ENCODE measurements at regions of chr11 and their contacts with region 1.

Region 1: DNA sequence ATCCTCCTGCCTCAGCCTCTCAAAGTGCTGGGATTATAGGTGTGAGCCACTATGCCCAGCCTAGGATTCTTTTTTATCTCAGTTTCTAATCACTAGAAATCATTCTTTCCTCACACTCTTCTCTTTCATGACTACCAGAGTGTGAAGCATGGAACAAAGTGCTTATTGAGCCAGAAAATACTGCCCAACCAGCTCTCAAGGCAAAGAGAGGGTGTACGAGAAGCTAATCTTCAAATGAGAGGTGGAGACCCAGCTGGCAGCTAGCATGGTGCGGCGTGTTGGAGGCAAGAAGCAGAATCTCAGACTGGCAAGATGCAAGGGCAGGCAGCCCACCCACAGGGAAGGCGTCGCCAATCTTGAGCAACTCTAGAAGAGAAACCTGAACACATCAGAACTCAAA is 41.1 kb upstream of the ME3 start:
- DNase-seq: no peak
- H3K4me3 ChIP-seq: no peak overlapping the region
- CTCF ChIP-seq: no peak
- POLR2A ChIP-seq: no peak

Region 2: DNA sequence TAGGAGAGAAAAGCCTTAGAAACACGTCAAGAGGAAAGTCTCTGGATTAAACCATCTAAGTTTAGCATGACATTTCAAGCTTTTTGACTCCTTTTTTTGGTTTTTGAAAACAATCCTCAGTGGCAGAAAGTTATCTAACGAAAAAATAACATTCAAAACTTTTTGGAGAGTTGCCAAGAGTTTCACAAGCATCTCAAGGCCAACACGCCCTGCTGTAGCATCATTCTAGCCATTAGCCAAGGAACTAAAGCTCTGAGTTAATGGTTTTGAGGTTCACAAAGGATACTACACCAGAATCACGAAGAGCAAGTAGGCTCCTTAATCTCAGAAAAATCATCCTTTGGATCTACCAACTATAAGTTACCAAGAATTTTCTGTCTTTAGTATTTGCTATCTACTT is 739.4 kb before region 1 on chr11:
- intact Hi-C with region 1: loop called (anchors 5 kb)
- DNase-seq: no peak
- H3K4me3 ChIP-seq: no peak overlapping the region
- CTCF ChIP-seq: no peak
- POLR2A ChIP-seq: no peak

Region 3: GRCh38 chr11:86608251-86608799 is 105.2 kb before region 1 on chr11:
- intact Hi-C with region 1: no loop called
- DNase-seq: peak; percentile 64 to 90
- H3K4me3 ChIP-seq: no peak overlapping the region
- CTCF ChIP-seq: peak in 1 of 3 donors; percentile 73
- POLR2A ChIP-seq: no peak

Region 4: DNA sequence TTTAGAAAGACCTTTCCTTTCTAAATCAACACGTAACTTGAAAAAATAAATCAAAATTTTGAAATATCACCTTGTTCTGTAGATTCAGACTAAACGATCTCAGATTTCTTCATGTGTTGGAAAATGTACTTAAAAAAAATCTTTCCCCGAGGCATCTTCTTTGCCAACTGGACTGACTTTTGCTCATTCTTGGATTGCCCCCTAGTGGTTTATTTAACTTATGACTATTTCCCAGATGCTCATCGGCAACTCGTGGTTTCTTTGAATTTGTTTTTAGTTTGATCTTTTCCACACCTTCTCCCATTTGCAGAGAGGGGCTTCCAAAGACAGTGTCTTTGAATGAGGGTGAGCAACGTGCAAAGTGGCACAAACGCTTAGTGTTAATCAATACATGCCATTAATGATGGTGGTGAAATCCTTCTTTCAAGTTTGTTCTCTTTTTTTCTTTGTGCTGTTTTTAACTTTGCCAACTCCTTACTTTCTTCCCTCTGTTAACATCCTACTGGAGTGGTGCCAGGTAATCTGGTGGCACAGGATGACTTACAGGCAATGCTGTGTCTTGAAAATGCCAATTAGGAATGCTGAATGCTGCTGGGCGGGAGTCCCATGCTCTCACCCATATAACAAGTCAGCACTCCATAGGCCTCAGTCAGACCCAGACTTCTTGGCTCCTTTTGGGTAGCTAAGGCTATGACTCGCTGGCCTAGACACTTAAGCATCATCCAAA is 105.1 kb after region 1 on chr11:
- intact Hi-C with region 1: no loop called
- DNase-seq: no peak
- H3K4me3 ChIP-seq: no peak overlapping the region
- CTCF ChIP-seq: peak in 1 of 3 donors; percentile 43
- POLR2A ChIP-seq: no peak